ENCODE measurements at regions of chrX and their contacts with region 1.

Region 1: GRCh38 chrX:110002300-110003166 is at the start of gene TMEM164:
- DNase-seq: peak; percentile 85
- ATAC-seq: peak; percentile 95 to 96
- total RNA-seq, gene TMEM164: 31.8 to 35.2 TPM

Region 2: GRCh38 chrX:109927663-109928273 is 74.8 kb before region 1 on chrX:
- intact Hi-C with region 1: loop called in 1 of 2 experiments (anchors 2 kb)
- DNase-seq: peak; percentile 21
- ATAC-seq: peak; percentile 78 to 84

Region 3: DNA sequence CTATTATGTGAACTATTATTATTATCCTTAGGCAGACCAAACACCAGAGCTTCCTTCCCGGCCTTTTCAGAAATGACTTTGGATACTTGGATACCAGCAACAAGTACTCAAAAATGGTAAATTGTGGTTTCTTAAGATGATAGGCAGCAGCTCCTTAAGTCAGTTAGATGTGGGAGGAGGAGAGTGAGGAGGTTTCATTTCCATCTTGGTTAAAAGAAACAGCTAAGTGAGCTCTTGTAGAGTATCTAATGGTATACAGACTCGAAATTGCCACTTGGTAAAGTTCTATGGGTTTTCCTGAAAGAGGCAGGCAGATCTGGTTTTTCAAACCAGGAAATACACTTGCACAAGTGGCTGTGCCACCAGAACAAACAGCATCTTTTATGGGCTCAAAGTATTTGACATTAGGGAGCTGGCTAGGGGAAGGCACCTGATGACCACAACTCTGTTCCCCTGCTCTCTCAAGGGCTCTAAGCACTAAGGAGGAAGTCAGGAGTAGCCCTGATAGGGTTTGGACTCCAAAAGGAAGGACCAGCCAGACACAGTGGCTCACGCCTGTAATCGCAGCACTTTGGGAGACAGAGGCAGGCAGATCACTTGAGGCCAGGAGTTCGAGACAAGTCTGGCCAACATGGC is 131.3 kb after region 1 on chrX:
- intact Hi-C with region 1: no loop called
- DNase-seq: no peak
- ATAC-seq: no peak

Region 4: GRCh38 chrX:110146521-110146920 is 144.0 kb after region 1 on chrX:
- intact Hi-C with region 1: loop called in 1 of 2 experiments (anchors 10 kb)
- DNase-seq: no peak
- ATAC-seq: peak; percentile 56 to 80